Common myeloid progenitor, CD34-positive (primary cell): ENCODE measurements at regions of chr9 and their contacts with region 1.

Region 1: GRCh38 chr9:32550562-32551433 is 1.3 kb upstream of the SMIM27 start:
- DNase-seq: peak; percentile 97 to 99 (median 99)
- H3K4me3 ChIP-seq: peak overlapping the region; percentile 89 to 98 (median 91)
- H3K27ac ChIP-seq: peak overlapping the region; percentile 93 to 98
- H3K4me1 ChIP-seq: peaks cover 31 to 55% (median 36%) of the 10 kb centered on the region in 4 experiments
- H3K27me3 ChIP-seq: no peaks in the 10 kb centered on the region

Region 2: DNA sequence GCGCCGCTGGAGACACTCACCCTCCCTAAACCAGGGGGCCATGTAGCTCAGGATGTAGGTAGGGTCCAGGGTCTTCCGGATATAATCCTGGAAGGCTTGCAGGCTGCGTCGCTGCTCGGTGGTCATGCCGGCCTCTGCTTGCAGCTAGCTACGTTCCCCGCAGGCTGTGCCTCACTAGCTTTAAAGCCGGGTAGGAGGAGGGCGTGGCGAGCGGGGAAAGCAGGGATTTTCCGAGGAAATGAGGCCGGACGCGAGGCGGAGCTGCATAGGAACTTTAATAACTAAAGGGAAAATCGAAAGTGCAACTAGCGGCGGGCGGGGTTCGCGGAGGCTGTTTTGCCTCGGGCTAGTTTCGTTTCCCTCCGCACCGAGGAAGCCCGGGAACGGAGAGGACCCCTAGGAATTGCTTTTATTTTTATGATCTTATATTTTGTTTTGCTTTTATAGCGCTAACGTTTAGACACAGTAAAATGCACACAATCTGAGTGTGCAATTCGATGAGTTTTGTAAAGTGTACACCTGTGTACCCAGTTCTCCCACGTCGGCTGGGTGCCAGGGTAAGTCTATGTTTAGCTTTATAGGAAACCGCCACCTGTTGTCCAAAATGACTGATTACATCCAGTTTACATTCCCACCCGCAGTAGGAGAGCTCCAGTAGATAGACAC is 24.6 kb before region 1 on chr9 and contains the start of gene RIGI:
- CTCF ChIA-PET with region 1: interaction called, 21 read pairs
- POLR2A ChIA-PET with region 1: interaction called, 7 read pairs
- DNase-seq: peak; percentile 88 to 90 (median 90)
- H3K4me3 ChIP-seq: peak within 1 kb of the TSS; percentile 81 to 98 (median 95)
- H3K27ac ChIP-seq: peak within 1 kb of the TSS; percentile 61 to 83
- H3K4me1 ChIP-seq: peaks cover 7 to 18% (median 13%) of the 10 kb centered on the region in 4 experiments
- H3K27me3 ChIP-seq: no peaks in the 10 kb centered on the region

Region 3: DNA sequence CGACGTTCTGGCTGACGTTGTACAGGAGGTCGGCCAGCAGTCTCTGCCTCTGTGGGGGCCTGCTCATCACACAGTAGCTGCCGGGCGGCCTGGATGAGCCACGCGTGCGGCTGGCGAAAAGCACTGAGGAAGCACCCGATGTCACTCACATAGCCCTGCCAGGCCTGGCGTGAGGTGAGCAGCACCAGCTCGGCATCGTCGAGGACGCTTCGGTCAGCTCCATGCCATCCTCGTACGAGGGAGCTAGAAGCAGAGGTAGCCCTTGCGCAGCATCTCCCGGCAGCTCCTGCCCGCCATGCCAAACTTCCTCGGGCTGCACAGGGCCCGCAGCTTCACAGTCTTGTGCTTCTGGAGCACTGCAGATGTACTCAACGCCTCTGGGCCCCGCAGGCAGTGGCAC is 16.0 kb after region 1 on chr9:
- CTCF ChIA-PET with region 1: interaction called, 73 read pairs
- POLR2A ChIA-PET with region 1: interaction called, 12 read pairs
- DNase-seq: no peak
- H3K4me3 ChIP-seq: no peak overlapping the region
- H3K27ac ChIP-seq: no peak overlapping the region
- H3K4me1 ChIP-seq: peaks cover 5 to 24% (median 10%) of the 10 kb centered on the region in 4 experiments
- H3K27me3 ChIP-seq: no peaks in the 10 kb centered on the region

Region 4: GRCh38 chr9:32587901-32588300 is 37.1 kb after region 1 on chr9:
- CTCF ChIA-PET with region 1: no interaction called
- POLR2A ChIA-PET with region 1: no interaction called
- DNase-seq: peak in 2 of 3 donors; percentile 30 to 42
- H3K4me3 ChIP-seq: no peak overlapping the region
- H3K27ac ChIP-seq: no peak overlapping the region
- H3K4me1 ChIP-seq: no peaks in the 10 kb centered on the region
- H3K27me3 ChIP-seq: peaks cover 0 to 27% (median 6%) of the 10 kb centered on the region in 5 experiments